PC-3 (cell line): ENCODE measurements at regions of chr10 and their contacts with region 1.

Region 1: GRCh38 chr10:71812016-71812912 is 38.8 kb downstream of the PSAP start:
- DNase-seq: peak; percentile 60
- ATAC-seq: peak; percentile 77
- H3K4me3 ChIP-seq: no peak overlapping the region
- H3K27ac ChIP-seq: no peak overlapping the region
- H3K4me1 ChIP-seq: no peaks in the 10 kb centered on the region
- H3K27me3 ChIP-seq: no peaks in the 10 kb centered on the region
- CTCF ChIP-seq: peak; percentile 84

Region 2: DNA sequence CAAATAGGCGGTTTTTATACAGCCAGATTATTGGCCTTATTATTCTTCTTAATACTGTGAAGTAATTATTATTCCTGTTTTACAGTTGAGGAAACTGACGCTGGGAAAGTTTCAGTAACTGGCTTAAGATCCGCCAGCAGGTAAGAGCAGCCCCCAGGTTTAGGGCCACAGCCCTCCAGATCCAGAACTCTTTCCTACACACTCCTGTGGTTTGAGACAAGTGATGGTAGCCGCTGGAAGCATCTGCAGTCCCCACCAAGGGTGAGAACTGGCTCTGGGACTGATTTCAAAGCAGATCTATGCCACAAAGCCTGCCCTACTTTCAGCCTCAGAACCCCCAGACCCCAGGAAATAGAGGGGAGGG is 602.9 kb before region 1 on chr10:
- CTCF ChIA-PET with region 1: no interaction called
- POLR2A ChIA-PET with region 1: no interaction called
- intact Hi-C with region 1: no loop called
- DNase-seq: no peak
- ATAC-seq: no peak
- H3K4me3 ChIP-seq: no peak overlapping the region
- H3K27ac ChIP-seq: no peak overlapping the region
- H3K4me1 ChIP-seq: peaks cover 9% of the 10 kb centered on the region; the same call in 1 of the 2 replicates
- H3K27me3 ChIP-seq: peaks cover 42% of the 10 kb centered on the region
- CTCF ChIP-seq: no peak; the same call in 1 of the 2 replicates

Region 3: DNA sequence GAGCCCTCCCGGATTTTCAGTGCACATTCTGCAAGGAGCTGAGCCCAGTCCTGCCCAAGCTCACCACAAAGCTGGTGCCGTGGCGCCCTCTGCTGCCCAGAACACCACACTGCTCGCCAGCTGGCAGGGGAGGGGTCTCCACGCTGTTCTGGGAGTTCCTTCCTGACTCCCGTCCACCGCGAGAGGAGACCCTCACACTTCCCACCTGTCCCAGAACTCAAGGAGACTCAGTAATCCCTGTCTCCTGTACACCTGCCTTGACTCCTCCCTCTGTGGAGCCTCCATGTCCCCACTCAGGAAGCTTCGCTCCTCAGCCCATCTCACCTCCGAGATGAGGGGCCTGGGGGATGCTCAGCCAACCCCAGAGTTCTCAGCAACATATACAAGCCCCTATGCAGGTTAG is 104.0 kb before region 1 on chr10:
- CTCF ChIA-PET with region 1: no interaction called
- POLR2A ChIA-PET with region 1: no interaction called
- intact Hi-C with region 1: loop called (anchors 5 kb)
- DNase-seq: peak; percentile 44
- ATAC-seq: peak; percentile 75
- H3K4me3 ChIP-seq: no peak overlapping the region
- H3K27ac ChIP-seq: no peak overlapping the region
- H3K4me1 ChIP-seq: no peaks in the 10 kb centered on the region
- H3K27me3 ChIP-seq: no peaks in the 10 kb centered on the region
- CTCF ChIP-seq: peak; percentile 78

Region 4: DNA sequence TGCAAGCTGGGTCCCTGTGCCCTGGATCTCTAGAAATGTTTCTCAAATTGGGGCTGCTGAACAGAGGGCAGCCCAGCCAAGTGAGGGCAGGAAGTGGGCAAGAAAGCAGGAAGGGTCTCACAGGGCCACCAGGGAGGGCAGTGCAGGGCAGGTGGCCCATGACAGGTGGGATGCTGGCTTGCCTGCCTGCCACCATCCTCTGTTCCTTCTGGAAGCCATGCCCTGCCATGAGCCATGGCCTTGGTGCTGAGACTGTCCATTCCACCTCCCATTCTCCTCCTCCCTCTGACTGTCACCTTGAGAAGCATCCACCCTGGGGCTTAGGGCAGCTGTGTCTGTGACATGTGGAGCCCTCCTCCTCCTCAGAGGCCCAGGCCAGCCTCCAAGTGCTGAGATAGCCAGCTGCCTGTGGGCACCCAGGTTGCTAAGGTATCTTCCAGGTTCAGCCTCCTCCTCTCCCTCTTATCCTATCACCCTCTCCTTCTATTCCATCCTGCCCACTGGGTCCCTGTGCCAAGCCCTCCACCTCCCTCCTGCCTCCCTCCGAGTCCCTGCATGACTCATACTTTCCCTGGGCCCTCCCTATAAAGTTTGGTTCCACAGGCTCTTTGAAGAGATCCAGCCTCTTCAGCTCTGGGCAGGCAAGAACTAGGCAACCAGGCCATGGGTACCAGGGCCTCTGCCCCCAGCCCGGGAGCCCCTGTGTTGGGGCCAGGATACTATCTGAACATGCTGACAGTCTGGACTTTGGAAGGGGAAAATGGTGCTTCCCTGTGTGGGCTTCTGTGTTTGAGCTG is 40.2 kb before region 1 on chr10:
- CTCF ChIA-PET with region 1: no interaction called
- POLR2A ChIA-PET with region 1: no interaction called
- intact Hi-C with region 1: loop called (anchors 5 kb)
- DNase-seq: peak; percentile 73
- ATAC-seq: peak; percentile 34
- H3K4me3 ChIP-seq: peak overlapping the region; percentile 72; the same call in 1 of the 2 replicates
- H3K27ac ChIP-seq: no peak overlapping the region
- H3K4me1 ChIP-seq: peaks cover 28% of the 10 kb centered on the region
- H3K27me3 ChIP-seq: no peaks in the 10 kb centered on the region
- CTCF ChIP-seq: no peak

Region 5: GRCh38 chr10:71840177-71840957 is 28.1 kb after region 1 on chr10:
- CTCF ChIA-PET with region 1: no interaction called
- POLR2A ChIA-PET with region 1: no interaction called
- intact Hi-C with region 1: no loop called
- DNase-seq: peak; percentile 24
- ATAC-seq: peak; percentile 31; the same call in 1 of the 2 replicates
- H3K4me3 ChIP-seq: no peak overlapping the region
- H3K27ac ChIP-seq: no peak overlapping the region
- H3K4me1 ChIP-seq: peaks cover 18% of the 10 kb centered on the region
- H3K27me3 ChIP-seq: no peaks in the 10 kb centered on the region
- CTCF ChIP-seq: no peak